Panc1 (cell line): ENCODE measurements at regions of chr14 and their contacts with region 1.

Region 1: DNA sequence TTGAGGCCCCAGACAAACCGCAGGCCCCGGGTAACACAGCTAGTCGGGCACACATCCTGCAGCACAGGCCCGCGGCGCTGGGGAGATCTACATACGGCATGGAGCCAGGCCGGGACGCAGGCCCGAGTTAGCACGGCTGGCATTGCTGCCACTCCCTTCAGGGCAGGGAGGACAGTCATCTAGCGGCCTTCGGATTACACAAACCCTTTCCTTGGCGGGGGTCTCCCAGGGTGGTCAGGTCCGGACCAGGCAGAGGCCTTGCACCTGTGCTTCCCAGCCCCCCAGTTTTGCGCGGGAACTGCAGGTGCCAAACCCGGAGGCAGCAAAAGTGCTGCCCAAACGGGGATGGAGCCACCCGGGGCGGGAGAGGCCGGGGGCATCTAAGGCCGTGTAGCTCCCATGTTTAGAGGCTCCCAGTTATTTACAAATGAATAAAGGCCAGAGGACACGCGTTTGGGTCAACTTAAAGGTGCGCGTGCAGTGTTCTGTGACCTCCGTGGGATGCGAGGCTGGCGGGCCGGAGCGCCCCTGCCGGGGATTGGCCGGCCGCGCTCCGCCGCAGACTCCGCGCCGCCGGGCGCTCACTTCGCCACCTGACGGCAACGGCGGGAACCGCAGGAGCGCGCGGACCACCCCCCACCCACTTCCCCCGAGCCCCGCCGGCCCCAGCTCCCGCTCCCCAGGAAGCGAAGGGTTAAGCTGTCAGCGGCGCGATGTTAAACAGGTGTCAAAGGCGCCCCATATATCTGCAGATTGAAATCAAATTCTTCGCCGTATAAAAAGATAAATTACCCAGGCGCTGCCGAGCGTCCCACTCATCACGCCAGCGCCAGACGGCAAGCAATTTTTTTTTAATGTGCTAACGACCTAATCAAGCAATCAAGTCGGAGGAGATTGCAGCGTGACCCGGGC is 18.1 kb downstream of the VSX2 start:
- DNase-seq: no peak
- ATAC-seq: peak; percentile 84
- H3K4me3 ChIP-seq: peak overlapping the region; percentile 41 to 59
- H3K27ac ChIP-seq: no peak overlapping the region
- H3K4me1 ChIP-seq: no peaks in the 10 kb centered on the region
- H3K27me3 ChIP-seq: no peaks in the 10 kb centered on the region
- CTCF ChIP-seq: peak; percentile 97

Region 2: GRCh38 chr14:73741386-73741875 is 515.9 kb before region 1 on chr14:
- CTCF ChIA-PET with region 1: interaction called, 11 read pairs
- POLR2A ChIA-PET with region 1: no interaction called
- in situ Hi-C with region 1: no loop called
- intact Hi-C with region 1: no loop called
- DNase-seq: no peak
- ATAC-seq: peak; percentile 58
- H3K4me3 ChIP-seq: peak overlapping the region; percentile 2 to 37; a peak in 3 of 4 replicates
- H3K27ac ChIP-seq: peak overlapping the region; percentile 82
- H3K4me1 ChIP-seq: peaks cover 72% of the 10 kb centered on the region
- H3K27me3 ChIP-seq: no peaks in the 10 kb centered on the region
- CTCF ChIP-seq: no peak

Region 3: DNA sequence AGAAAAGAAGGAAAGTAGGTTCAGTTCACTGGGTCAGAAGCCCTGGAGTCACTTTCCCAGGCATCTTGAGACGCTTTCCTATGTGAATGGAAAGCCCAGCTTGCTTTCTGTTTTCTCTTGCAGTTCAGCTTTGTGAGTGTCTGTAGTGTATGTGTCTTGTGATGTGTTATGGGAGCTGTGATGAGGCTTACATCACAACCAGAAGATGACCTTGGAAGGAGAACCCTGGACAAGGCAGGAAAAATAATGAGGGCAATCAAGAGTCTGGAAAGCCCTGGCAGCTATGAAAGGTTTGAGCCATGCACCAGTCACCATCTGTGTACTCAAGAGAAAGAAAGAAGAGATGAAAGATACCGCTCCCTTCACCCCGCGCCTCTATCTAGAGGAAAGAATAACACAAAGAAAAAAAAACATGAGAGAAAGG is 440.9 kb before region 1 on chr14:
- CTCF ChIA-PET with region 1: no interaction called
- POLR2A ChIA-PET with region 1: no interaction called
- in situ Hi-C with region 1: no loop called
- intact Hi-C with region 1: no loop called
- DNase-seq: no peak
- ATAC-seq: no peak
- H3K4me3 ChIP-seq: no peak overlapping the region
- H3K27ac ChIP-seq: no peak overlapping the region
- H3K4me1 ChIP-seq: no peaks in the 10 kb centered on the region
- H3K27me3 ChIP-seq: no peaks in the 10 kb centered on the region
- CTCF ChIP-seq: no peak